CD14-positive monocyte (primary cell): ENCODE measurements at regions of chr1 and their contacts with region 1.

Region 1: DNA sequence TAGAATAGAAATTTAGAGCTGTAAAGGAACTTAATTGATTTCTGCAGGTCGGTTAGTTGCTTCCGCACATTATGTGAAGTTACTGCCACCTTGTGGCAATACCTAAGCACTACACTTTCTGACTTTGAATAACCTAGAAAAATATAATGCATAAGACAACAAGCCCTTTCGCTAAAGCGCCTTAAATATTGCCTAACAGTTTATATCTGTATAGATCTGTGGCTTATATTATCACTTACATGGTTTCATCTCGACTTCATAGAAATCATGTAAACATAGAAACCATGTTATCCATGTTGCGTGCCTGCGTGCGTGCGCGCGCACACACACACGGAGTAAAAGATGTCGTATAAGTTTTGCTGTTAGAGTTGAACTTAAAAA is 10.9 kb upstream of the IFI16 start:
- DNase-seq: peak; percentile 47 to 72 (median 55)
- H3K4me3 ChIP-seq: peak overlapping the region in 2 of 3 experiments; percentile 9 to 60
- H3K4me3 Mint-ChIP-seq: peak overlapping the region in 1 of 2 donors; percentile 81
- H3K27ac ChIP-seq: no peak overlapping the region
- H3K27ac Mint-ChIP-seq: no peak overlapping the region
- H3K4me1 ChIP-seq: peaks cover 4 to 9% of the 10 kb centered on the region in 2 donors
- H3K4me1 Mint-ChIP-seq: peaks cover 13% of the 10 kb centered on the region
- H3K27me3 ChIP-seq: no peaks in the 10 kb centered on the region
- H3K27me3 Mint-ChIP-seq: peaks cover 0 to 2% (median 0%) of the 10 kb centered on the region in 3 donors
- CTCF ChIP-seq: peak; percentile 93

Region 2: GRCh38 chr1:158506369-158506987 is 492.3 kb before region 1 on chr1:
- intact Hi-C with region 1: loop called (anchors 1 to 2 kb)
- DNase-seq: peak; percentile 44 to 53 (median 51)
- H3K4me3 ChIP-seq: no peak overlapping the region
- H3K4me3 Mint-ChIP-seq: no peak overlapping the region
- H3K27ac ChIP-seq: no peak overlapping the region
- H3K27ac Mint-ChIP-seq: no peak overlapping the region
- H3K4me1 ChIP-seq: no peaks in the 10 kb centered on the region
- H3K4me1 Mint-ChIP-seq: peaks cover 8% of the 10 kb centered on the region
- H3K27me3 ChIP-seq: peaks cover 2 to 4% of the 10 kb centered on the region in 2 donors
- H3K27me3 Mint-ChIP-seq: peaks cover 4 to 10% (median 5%) of the 10 kb centered on the region in 3 donors
- CTCF ChIP-seq: peak; percentile 91

Region 3: DNA sequence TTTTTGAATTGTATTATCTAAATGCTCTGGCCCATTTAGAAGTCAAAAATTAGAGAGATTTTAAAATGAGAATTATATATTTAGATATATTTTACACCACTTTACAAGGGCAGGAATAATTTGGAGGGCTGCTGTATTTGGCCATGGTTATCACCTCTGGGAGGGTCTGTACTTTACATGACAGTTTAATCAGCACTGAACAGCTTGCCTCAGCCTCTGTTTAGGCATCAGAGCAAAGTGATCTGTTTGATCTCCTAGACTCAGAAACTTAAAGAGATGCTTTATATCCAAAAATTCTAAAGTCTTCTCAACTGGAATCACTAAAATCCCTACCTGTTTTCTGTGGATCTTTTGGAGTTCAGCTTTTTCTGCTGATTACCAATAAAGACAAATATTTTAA is 306.9 kb before region 1 on chr1:
- intact Hi-C with region 1: no loop called
- DNase-seq: no peak
- H3K4me3 ChIP-seq: no peak overlapping the region
- H3K4me3 Mint-ChIP-seq: no peak overlapping the region
- H3K27ac ChIP-seq: no peak overlapping the region
- H3K27ac Mint-ChIP-seq: no peak overlapping the region
- H3K4me1 ChIP-seq: peaks cover 0 to 2% of the 10 kb centered on the region in 2 donors
- H3K4me1 Mint-ChIP-seq: peaks cover 1% of the 10 kb centered on the region
- H3K27me3 ChIP-seq: peaks cover 0 to 3% of the 10 kb centered on the region in 2 donors
- H3K27me3 Mint-ChIP-seq: peaks cover 0 to 4% (median 0%) of the 10 kb centered on the region in 3 donors
- CTCF ChIP-seq: no peak

Region 4: DNA sequence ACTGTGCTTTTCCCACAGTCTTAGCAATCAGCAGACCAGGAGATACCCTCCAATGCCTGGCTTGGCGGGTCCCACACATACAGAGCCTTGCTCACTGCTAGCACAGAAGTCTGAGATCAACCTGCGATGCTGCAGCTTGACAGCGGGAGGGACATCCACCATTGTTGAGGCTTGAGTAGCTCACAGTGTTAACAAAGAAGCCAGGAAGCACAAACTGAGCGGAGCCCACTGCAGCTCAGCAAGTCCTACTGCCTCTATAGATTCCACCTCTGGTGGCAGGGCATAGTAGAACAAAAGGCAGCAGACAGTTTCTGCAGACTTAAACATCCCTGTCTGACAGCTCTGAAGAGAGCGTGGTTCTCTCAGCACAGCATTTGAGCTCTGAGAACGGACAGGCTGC is 134.2 kb before region 1 on chr1:
- intact Hi-C with region 1: no loop called
- DNase-seq: no peak
- H3K4me3 ChIP-seq: no peak overlapping the region
- H3K4me3 Mint-ChIP-seq: no peak overlapping the region
- H3K27ac ChIP-seq: no peak overlapping the region
- H3K27ac Mint-ChIP-seq: peak overlapping the region in 1 of 7 donors; percentile 26
- H3K4me1 ChIP-seq: no peaks in the 10 kb centered on the region
- H3K4me1 Mint-ChIP-seq: no peaks in the 10 kb centered on the region
- H3K27me3 ChIP-seq: peaks cover 0 to 2% of the 10 kb centered on the region in 2 donors
- H3K27me3 Mint-ChIP-seq: no peaks in the 10 kb centered on the region
- CTCF ChIP-seq: no peak

Region 5: GRCh38 chr1:159009704-159010361 is 11.1 kb after region 1 on chr1 and contains the start of gene IFI16:
- intact Hi-C with region 1: no loop called
- DNase-seq: peak; percentile 84 to 96 (median 93)
- H3K4me3 ChIP-seq: peak within 1 kb of the TSS; percentile 90 to 99 (median 95)
- H3K4me3 Mint-ChIP-seq: peak within 1 kb of the TSS; percentile 87 to 97
- H3K27ac ChIP-seq: peak within 1 kb of the TSS; percentile 73 to 92
- H3K27ac Mint-ChIP-seq: peak within 1 kb of the TSS; percentile 92 to 98 (median 96)
- H3K4me1 ChIP-seq: peaks cover 49 to 71% of the 10 kb centered on the region in 2 donors
- H3K4me1 Mint-ChIP-seq: peaks cover 68% of the 10 kb centered on the region
- H3K27me3 ChIP-seq: no peaks in the 10 kb centered on the region
- H3K27me3 Mint-ChIP-seq: peaks cover 0 to 2% (median 0%) of the 10 kb centered on the region in 3 donors
- CTCF ChIP-seq: no peak
- polyA plus RNA-seq, gene IFI16: 64.8 to 99.7 (median 80.1) TPM